Activated CD4-positive, alpha-beta memory T cell treated with anti-CD3 and anti-CD28 coated beads for 36 hours (primary cell): ENCODE measurements at regions of chr5 and their contacts with region 1.

Region 1: GRCh38 chr5:138274189-138274853 is at the start of gene GFRA3:
- DNase-seq: peak; percentile 13
- H3K4me3 Mint-ChIP-seq: no peak within 1 kb of the TSS
- H3K27ac Mint-ChIP-seq: no peak within 1 kb of the TSS
- H3K4me1 Mint-ChIP-seq: peaks cover 6% of the 10 kb centered on the region
- H3K27me3 Mint-ChIP-seq: peaks cover 19% of the 10 kb centered on the region
- total RNA-seq, gene GFRA3: 0.12 TPM in 1 of 2 experiments, not detected in the other

Region 2: DNA sequence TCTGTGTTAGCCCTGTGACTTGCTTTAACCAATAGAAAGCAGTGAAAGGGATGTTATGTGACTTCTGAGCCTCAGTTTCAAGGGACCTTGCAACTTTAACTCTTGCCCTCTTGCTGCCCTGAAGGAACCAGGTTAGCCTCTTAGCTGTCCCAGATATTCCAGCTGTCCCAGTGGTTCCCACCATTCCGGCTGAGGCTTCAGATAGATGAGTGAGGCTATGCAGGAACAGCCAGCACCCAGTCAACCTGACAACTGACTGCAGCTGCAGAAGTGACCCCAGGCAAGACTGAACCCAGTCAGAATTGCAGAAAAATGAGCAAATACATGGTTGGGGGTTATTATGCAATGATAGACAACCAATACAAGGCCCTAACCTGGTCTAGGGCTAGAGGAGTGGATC is 50.8 kb before region 1 on chr5:
- CTCF ChIA-PET with region 1: interaction called, 5 read pairs
- POLR2A ChIA-PET with region 1: no interaction called
- intact Hi-C with region 1: loop called (anchors 2 kb)
- DNase-seq: no peak
- H3K4me3 Mint-ChIP-seq: no peak overlapping the region
- H3K27ac Mint-ChIP-seq: no peak overlapping the region
- H3K4me1 Mint-ChIP-seq: peaks cover 4% of the 10 kb centered on the region
- H3K27me3 Mint-ChIP-seq: peaks cover 8% of the 10 kb centered on the region